Thyroid gland (tissue), 4 donors: ENCODE measurements at regions of chr3 and their contacts with region 1.

Region 1: DNA sequence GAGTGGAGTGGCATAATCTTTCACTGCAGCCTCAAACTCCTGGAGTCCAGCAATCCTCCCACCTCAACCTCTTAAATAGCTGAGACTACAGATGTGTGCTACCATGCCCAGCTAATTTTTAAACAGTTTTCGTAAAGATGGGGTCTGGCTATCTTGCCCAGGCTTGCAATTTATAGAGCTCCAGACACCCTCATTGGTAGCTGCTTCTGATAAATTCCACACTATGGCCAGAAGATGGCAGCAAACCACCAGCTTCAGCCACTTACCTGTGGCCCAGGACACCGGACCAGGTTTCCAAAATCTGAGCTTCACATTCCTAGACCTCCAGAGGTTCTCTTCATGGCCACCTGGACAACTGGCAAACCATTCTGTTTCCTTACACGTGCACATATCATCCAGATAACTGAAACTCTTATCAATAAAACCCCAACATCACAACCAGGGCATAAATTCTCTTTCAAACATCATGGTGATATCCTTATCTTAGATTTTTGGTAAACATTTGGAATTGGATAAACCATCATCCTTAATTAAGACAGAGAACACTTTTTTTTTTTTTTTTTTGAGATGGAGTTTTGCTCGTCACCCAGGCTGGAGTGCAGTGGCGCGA is 28.9 kb downstream of the FBXW12 start:
- DNase-seq: peak; percentile 71 to 80
- H3K4me3 ChIP-seq: no peak overlapping the region
- H3K27ac ChIP-seq: peak overlapping the region in 2 of 3 donors; percentile 82 to 89
- H3K4me1 ChIP-seq: peaks cover 6 to 20% of the 10 kb centered on the region in 2 donors
- H3K27me3 ChIP-seq: no peaks in the 10 kb centered on the region
- CTCF ChIP-seq: peak in 5 of 6 experiments; percentile 63 to 97 (median 90)
- POLR2A ChIP-seq: no peak

Region 2: GRCh38 chr3:47772788-47773187 is 628.1 kb before region 1 on chr3:
- intact Hi-C with region 1: no loop called
- DNase-seq: no peak
- H3K4me3 ChIP-seq: no peak overlapping the region
- H3K27ac ChIP-seq: no peak overlapping the region
- H3K4me1 ChIP-seq: no peaks in the 10 kb centered on the region
- H3K27me3 ChIP-seq: no peaks in the 10 kb centered on the region
- CTCF ChIP-seq: no peak
- POLR2A ChIP-seq: no peak

Region 3: GRCh38 chr3:48273594-48274211 is 127.2 kb before region 1 on chr3:
- intact Hi-C with region 1: loop called (anchors 10 kb)
- DNase-seq: peak; percentile 46 to 51
- H3K4me3 ChIP-seq: no peak overlapping the region
- H3K27ac ChIP-seq: no peak overlapping the region
- H3K4me1 ChIP-seq: peaks cover 0 to under 1% of the 10 kb centered on the region in 2 donors
- H3K27me3 ChIP-seq: no peaks in the 10 kb centered on the region
- CTCF ChIP-seq: peak; percentile 35 to 76 (median 62)
- POLR2A ChIP-seq: no peak

Region 4: GRCh38 chr3:48518638-48519276 is 117.8 kb after region 1 on chr3:
- intact Hi-C with region 1: no loop called
- DNase-seq: no peak
- H3K4me3 ChIP-seq: no peak overlapping the region
- H3K27ac ChIP-seq: no peak overlapping the region
- H3K4me1 ChIP-seq: peaks cover 0 to 8% of the 10 kb centered on the region in 2 donors
- H3K27me3 ChIP-seq: no peaks in the 10 kb centered on the region
- CTCF ChIP-seq: no peak
- POLR2A ChIP-seq: no peak

Region 5: DNA sequence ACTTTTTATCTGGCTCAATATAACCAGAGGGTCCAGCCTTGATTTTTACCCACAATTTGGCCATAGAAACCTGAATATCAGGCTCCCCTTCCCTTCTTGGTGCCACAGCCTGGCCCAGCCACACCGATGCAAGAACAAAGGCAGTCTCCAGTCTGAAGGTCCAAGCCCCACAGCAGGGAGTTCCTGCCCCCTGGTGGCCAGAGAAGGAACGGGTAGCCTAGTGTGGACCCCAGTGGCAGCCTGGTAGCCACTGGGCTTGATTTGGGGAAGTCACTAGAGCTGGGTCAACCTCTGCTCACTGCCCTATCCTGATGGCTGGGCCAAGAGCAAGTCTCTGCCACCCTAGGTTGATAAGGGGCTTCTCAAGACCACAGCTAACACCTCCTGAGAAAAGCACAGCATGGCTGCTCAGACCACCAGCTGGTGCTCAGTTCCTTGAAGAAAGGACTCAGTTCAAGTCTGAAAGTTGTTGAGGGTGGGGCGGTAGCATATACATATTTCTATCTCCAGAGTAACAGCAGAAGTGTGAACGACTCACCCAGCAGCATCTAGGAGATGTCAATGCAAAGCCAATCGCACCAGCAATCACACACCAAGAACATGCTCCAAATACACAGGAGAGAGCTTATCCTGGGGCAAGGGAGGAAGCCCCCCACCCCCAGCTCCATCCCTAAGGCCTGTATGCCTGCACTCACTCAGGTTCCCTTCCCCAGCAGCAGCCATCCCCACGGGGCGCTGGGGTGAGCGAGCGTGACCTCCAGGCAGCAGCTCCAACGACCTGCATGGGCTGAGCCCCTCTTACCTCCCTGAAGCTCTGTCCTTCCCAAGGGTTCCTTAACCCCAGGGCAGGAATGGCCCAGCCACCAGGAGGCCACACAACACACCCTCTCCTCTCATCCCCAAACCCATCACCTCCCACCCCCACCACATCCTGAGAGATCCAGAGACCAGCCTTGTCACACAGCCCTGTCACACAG is 148.1 kb after region 1 on chr3:
- intact Hi-C with region 1: loop called (anchors 5 kb)
- DNase-seq: peak; percentile 81 to 85
- H3K4me3 ChIP-seq: no peak overlapping the region
- H3K27ac ChIP-seq: no peak overlapping the region
- H3K4me1 ChIP-seq: no peaks in the 10 kb centered on the region
- H3K27me3 ChIP-seq: no peaks in the 10 kb centered on the region
- CTCF ChIP-seq: peak; percentile 84 to 93 (median 88)
- POLR2A ChIP-seq: no peak

Region 6: DNA sequence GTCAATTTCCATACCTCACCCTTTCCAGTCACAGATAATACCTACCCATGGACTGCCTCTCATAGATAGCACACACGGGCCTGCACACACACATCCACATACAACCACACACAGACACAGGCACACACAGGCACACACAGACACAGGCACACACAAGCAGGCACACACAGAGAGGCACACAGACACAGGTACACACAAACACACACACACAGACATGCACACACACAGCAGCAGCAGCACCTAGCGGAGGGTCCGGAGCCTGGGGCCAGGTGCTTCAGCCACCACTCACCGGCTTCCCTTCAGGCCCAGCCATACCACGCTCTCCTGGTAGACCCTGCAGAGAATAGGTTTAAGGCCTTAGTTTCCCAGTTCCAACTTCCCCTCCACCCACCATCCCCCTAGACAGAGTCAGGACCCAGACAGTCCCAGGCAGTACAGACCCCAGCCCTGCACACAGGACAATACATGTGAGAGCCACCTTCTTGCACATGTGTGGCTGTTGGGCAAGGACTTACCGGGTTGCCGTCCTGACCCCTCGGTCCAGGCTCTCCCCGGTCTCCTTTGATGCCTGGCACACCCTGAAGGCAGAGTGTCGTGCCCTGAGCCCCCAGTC is 173.2 kb after region 1 on chr3:
- intact Hi-C with region 1: no loop called
- DNase-seq: no peak
- H3K4me3 ChIP-seq: no peak overlapping the region
- H3K27ac ChIP-seq: no peak overlapping the region
- H3K4me1 ChIP-seq: no peaks in the 10 kb centered on the region
- H3K27me3 ChIP-seq: no peaks in the 10 kb centered on the region
- CTCF ChIP-seq: no peak
- POLR2A ChIP-seq: no peak

Region 7: GRCh38 chr3:48679411-48680391 is 278.8 kb after region 1 on chr3:
- intact Hi-C with region 1: no loop called
- DNase-seq: no peak
- H3K4me3 ChIP-seq: no peak overlapping the region
- H3K27ac ChIP-seq: no peak overlapping the region
- H3K4me1 ChIP-seq: peaks cover 9 to 18% of the 10 kb centered on the region in 2 donors
- H3K27me3 ChIP-seq: no peaks in the 10 kb centered on the region
- CTCF ChIP-seq: no peak
- POLR2A ChIP-seq: no peak